HEK293 (cell line): ENCODE measurements at regions of chr20 and their contacts with region 1.

Region 1: DNA sequence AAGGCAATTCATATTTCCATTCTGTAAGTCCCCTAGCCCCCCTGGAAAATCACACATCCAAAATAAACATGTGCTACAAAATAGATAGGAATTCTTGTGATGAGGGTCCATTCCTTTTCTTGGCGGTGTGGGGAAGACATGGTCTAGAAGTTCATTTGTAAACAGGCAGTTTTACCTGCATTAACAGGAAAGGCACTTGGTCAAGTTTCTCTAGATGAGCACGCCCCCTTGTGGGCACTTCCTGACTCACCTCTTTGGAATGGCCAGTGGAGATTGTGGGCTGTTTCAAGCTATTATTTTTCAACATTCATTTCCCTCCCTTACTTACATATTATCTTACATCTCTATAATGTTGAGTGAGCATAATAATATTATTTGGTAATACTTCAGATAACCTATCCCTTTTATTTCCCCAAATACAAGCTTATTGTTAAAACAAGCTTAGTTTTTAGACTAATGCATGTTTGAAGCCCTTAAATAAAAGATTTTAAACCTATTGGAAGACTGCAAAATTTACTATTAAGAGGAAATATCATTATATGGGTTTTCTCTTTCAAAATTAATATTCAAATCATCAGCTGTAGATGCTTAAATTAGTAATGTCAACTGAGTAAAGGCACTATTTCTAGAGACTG is 92.1 kb downstream of the TASP1 start:
- H3K4me3 ChIP-seq: no peak overlapping the region
- H3K27ac ChIP-seq: no peak overlapping the region
- H3K4me1 ChIP-seq: no peaks in the 10 kb centered on the region
- CTCF ChIP-seq: 0 out of 2 replicates have a peak, but pooled peaks have one; percentile 31

Region 2: GRCh38 chr20:13111249-13111911 is 435.2 kb before region 1 on chr20:
- CTCF ChIA-PET with region 1: interaction called, 20 read pairs
- POLR2A ChIA-PET with region 1: no interaction called
- H3K4me3 ChIP-seq: no peak overlapping the region
- H3K27ac ChIP-seq: no peak overlapping the region
- H3K4me1 ChIP-seq: no peaks in the 10 kb centered on the region
- CTCF ChIP-seq: no peak

Region 3: DNA sequence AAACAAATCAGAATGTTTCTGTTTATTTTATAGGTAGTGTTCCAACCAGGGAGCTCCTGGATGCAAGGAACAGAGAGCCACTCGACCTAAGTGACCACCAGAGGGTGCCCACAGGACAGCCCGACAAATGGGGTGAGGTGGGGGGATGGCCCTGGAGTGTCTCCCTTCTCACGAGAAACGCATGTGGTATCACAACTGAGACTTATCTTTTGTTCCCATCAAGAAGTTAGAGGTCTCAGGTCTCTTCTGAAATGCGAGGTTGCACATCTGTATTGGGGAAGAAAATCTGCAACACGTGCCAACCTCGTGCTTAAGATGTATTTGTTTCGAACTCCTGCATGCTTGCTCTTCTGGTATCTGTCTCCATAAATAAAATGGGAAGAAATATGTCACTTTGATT is 221.6 kb before region 1 on chr20:
- CTCF ChIA-PET with region 1: interaction called, 23 read pairs
- POLR2A ChIA-PET with region 1: no interaction called
- H3K4me3 ChIP-seq: no peak overlapping the region
- H3K27ac ChIP-seq: no peak overlapping the region
- H3K4me1 ChIP-seq: no peaks in the 10 kb centered on the region
- CTCF ChIP-seq: 0 out of 2 replicates have a peak, but pooled peaks have one; percentile 23

Region 4: DNA sequence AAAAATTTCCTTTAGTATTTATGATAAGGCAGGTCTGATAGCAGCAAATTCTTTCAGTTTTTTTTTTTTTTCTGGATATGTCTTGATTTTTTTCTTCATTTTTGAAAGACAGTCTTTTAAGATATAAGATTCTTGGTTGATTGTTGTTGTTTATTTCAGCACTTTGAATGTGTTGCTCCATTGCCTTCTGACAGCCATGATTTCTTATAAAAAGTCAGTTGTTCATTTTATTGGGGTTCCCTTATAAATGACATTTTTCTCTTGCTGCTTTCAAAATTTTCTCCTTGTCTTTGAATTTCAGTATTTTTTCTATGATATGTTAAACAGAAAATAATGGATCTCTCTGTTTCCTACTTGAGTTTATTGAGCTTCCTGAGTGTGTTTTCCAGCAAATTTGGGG is 173.2 kb before region 1 on chr20:
- CTCF ChIA-PET with region 1: no interaction called
- POLR2A ChIA-PET with region 1: no interaction called
- H3K4me3 ChIP-seq: no peak overlapping the region
- H3K27ac ChIP-seq: no peak overlapping the region
- H3K4me1 ChIP-seq: no peaks in the 10 kb centered on the region
- CTCF ChIP-seq: no peak

Region 5: GRCh38 chr20:13515796-13516558 is 30.6 kb before region 1 on chr20:
- CTCF ChIA-PET with region 1: interaction called, 10 read pairs
- POLR2A ChIA-PET with region 1: no interaction called
- H3K4me3 ChIP-seq: no peak overlapping the region
- H3K27ac ChIP-seq: no peak overlapping the region
- H3K4me1 ChIP-seq: no peaks in the 10 kb centered on the region
- CTCF ChIP-seq: no peak

Region 6: GRCh38 chr20:13625304-13625979 is 78.8 kb after region 1 on chr20:
- CTCF ChIA-PET with region 1: no interaction called
- POLR2A ChIA-PET with region 1: no interaction called
- H3K4me3 ChIP-seq: no peak overlapping the region
- H3K27ac ChIP-seq: no peak overlapping the region
- H3K4me1 ChIP-seq: peaks cover 3% of the 10 kb centered on the region; the same call in 1 of the 2 replicates
- CTCF ChIP-seq: no peak

Region 7: DNA sequence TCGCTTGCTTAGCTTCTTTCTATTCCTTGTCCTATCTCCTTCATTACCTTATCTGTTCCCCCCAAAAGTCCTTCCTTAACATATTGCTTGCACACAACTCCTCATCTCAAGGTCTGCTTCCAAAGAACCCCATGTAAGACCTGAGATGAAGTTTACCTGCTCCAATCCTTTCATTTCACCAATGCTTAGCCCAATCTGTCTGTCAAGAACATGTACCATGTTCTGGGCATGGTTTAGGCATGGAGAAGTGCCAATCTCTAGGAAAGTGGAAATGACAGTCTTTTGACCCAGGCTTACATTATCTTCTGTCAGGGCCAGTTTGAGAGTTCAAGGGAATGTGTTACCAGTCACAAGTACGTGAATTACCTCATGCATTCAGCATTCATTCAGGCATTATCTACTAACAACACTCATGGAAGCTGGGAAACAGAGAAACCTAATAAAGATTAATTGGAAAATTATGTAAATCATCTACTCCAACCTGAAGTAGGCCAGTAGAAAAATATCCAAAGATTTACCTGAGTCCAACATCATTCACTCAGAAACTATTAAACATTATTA is 107.9 kb after region 1 on chr20:
- CTCF ChIA-PET with region 1: no interaction called
- POLR2A ChIA-PET with region 1: no interaction called
- H3K4me3 ChIP-seq: no peak overlapping the region
- H3K27ac ChIP-seq: no peak overlapping the region
- H3K4me1 ChIP-seq: peaks cover 14% of the 10 kb centered on the region
- CTCF ChIP-seq: no peak

Region 8: DNA sequence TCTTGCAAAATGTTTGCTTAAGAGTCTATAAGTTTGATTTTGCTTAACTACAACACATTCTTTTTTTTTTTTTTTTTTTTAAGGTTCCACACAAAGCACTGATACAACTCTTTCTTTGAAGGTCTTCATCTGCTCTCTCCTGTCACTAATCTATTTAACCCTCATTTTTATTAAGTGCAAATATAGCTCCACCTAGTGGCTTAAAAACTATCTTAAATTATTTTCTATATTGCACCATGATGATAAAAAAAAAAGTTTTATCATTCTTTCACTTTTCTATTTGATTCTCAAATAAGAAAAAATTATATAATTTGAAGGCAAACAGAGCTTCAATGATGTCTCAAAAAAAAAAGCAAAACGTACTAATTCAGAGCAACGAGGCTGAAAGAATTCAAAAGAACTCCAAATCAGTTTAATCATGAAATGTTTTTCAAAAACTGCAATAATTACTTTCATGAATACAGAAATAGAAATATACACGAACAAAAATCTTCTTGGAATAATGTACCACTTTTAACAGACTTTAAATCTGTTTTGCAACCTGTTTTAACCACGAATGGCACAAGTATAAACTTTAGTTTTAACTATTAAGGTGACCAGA is 225.3 kb after region 1 on chr20:
- CTCF ChIA-PET with region 1: interaction called, 14 read pairs
- POLR2A ChIA-PET with region 1: no interaction called
- H3K4me3 ChIP-seq: no peak overlapping the region
- H3K27ac ChIP-seq: no peak overlapping the region
- H3K4me1 ChIP-seq: no peaks in the 10 kb centered on the region
- CTCF ChIP-seq: no peak